ENCODE measurements at regions of chr10 and their contacts with region 1.

Region 1: DNA sequence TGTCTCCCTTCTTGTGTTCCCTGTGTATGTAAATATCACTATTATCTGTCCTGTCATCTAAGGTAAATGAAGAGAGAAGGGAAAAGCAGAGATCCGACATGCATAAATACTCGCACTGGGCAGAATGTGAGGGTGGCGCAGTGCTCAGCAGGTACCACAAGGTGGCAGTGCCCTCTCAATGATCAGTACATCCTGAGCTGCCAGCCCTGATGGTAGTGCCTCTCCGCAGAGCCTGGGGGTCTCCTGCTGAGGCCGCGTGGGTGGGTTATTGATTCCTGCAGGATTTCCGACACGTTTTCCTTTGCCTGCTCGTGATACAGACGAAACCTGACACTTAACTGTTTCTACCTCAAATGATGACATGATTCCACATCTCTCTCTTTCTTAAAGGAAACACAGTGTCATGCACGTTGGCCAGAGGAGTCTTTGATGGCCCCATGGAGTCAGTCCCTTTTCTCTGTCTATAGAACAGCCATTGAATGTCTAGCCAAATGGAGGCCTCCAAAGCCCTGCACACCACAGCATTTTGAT is 19.8 kb downstream of the RGR start:
- DNase-seq: peak; percentile 47
- H3K4me3 Mint-ChIP-seq: no peak overlapping the region
- H3K27ac Mint-ChIP-seq: no peak overlapping the region
- H3K4me1 Mint-ChIP-seq: peaks cover 17% of the 10 kb centered on the region
- H3K27me3 Mint-ChIP-seq: peaks cover 32% of the 10 kb centered on the region

Region 2: GRCh38 chr10:84293574-84294016 is 28.9 kb after region 1 on chr10:
- intact Hi-C with region 1: loop called (anchors 1 kb)
- DNase-seq: peak; percentile 36
- H3K4me3 Mint-ChIP-seq: no peak overlapping the region
- H3K27ac Mint-ChIP-seq: no peak overlapping the region
- H3K4me1 Mint-ChIP-seq: peaks cover 26% of the 10 kb centered on the region
- H3K27me3 Mint-ChIP-seq: peaks cover 41% of the 10 kb centered on the region

Region 3: GRCh38 chr10:84308481-84309304 is 44.0 kb after region 1 on chr10:
- intact Hi-C with region 1: no loop called
- DNase-seq: peak; percentile 29
- H3K4me3 Mint-ChIP-seq: peak overlapping the region; percentile 5
- H3K27ac Mint-ChIP-seq: peak overlapping the region; percentile 10
- H3K4me1 Mint-ChIP-seq: peaks cover 32% of the 10 kb centered on the region
- H3K27me3 Mint-ChIP-seq: peaks cover 10% of the 10 kb centered on the region

Region 4: GRCh38 chr10:84352251-84352842 is 87.7 kb after region 1 on chr10:
- intact Hi-C with region 1: loop called (anchors 2 kb)
- DNase-seq: peak; percentile 29
- H3K4me3 Mint-ChIP-seq: no peak overlapping the region
- H3K27ac Mint-ChIP-seq: no peak overlapping the region
- H3K4me1 Mint-ChIP-seq: peaks cover 36% of the 10 kb centered on the region
- H3K27me3 Mint-ChIP-seq: no peaks in the 10 kb centered on the region

Region 5: DNA sequence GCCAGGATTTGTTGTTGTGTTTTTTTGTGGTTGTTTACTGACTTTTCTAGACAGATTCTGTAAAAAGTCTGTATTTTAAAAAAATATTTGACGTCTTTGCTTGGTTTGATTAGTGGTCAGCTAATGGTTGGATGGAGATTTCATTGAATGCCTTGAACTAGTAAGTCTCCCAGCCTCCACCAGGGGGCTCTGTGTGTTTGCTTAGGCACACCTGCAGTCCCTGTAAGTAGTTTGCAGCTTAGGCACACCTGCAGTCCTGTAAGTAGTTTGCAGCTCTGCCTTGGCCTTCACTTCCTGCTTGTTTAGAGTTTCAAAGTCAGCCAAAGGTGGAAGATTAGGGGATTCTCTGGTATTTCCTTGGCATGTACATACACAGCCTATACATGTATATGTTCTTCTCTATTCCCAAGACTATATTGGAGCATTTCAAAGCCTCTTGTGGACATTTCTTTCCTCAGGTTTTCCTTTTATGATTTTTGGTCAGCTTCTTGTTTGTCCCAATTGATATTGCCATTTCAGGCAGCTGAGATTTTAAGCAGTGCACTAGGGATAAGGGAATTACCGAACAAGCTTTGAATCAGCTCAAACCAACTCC is 165.3 kb after region 1 on chr10:
- intact Hi-C with region 1: loop called (anchors 10 kb)
- DNase-seq: peak; percentile 29
- H3K4me3 Mint-ChIP-seq: no peak overlapping the region
- H3K27ac Mint-ChIP-seq: no peak overlapping the region
- H3K4me1 Mint-ChIP-seq: peaks cover 7% of the 10 kb centered on the region
- H3K27me3 Mint-ChIP-seq: no peaks in the 10 kb centered on the region

Region 6: DNA sequence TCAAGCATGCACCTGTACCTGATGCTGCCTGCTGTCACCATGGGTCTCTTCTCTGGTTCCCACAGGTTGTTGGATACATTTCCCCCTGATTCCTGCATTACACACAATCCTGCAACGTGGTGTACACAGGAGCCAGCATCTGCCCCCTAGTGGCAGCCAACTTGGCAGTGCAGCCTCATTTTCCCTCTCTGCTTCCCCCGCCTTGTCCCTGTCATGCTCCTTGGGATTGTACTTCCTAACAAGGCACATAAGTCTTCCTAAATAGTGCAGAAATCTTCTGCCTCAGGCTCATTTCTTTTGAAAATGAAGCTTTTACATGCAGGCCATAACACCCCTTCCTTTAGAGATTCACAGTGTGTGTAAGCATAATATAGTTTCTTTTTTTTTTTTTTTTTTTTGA is 451.2 kb after region 1 on chr10:
- intact Hi-C with region 1: loop called (anchors 10 kb)
- DNase-seq: no peak
- H3K4me3 Mint-ChIP-seq: no peak overlapping the region
- H3K27ac Mint-ChIP-seq: no peak overlapping the region
- H3K4me1 Mint-ChIP-seq: no peaks in the 10 kb centered on the region
- H3K27me3 Mint-ChIP-seq: peaks cover 1% of the 10 kb centered on the region